ENCODE measurements at regions of chr1 and their contacts with region 1.

Region 1: DNA sequence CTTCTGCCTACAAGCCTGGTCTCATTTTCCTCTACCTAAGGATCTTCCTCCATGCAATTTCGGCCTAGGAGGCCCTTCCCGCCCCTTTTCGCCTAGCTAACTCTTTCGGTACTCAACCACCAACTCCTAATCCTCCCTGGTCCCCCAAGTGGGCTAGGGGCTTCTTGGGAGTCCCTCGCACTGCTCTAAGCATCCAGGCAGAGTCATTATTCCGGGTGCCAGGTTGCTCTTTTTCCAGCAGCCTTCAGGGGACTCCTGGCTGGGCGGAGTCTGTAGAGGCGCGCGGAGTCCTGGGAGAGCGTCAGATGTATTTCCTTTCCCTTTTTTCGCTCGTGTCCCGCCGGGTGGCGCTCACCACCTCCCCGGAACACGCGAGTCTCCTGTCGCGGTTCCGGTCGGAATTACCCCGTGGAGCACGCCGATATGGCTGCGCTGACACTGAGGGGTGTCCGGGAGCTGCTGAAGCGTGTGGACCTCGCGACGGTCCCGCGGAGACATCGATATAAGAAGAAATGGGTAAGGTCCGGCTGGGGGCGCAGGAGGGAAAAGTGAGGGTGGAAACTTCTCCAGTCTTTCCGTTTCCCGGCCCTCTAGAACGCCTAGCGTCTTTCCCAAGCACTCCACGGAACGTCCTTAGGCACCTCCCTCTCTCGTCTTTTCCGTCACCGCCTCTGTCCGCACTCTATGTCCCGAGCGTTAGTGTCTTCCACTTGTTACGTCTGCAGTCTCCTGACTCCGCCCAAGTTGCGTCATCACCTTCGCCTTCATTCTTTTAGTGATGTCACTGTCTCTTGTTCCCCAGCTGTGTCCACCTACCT is at the start of gene NSUN4:
- DNase-seq: peak; percentile 92
- H3K4me3 ChIP-seq: peak within 1 kb of the TSS; percentile 70 to 91 (median 89)
- H3K27ac ChIP-seq: peak within 1 kb of the TSS; percentile 88
- H3K4me1 ChIP-seq: peaks cover 10% of the 10 kb centered on the region
- H3K27me3 ChIP-seq: no peaks in the 10 kb centered on the region
- CTCF ChIP-seq: peak; percentile 69 to 79
- POLR2A ChIP-seq: peak; percentile 84
- total RNA-seq, gene NSUN4: 21.6 and 22.4 TPM in 2 replicates

Region 2: GRCh38 chr1:46303038-46303871 is 37.4 kb before region 1 on chr1 and contains the starts of genes LRRC41 and UQCRH:
- CTCF ChIA-PET with region 1: interaction called, 17 read pairs
- POLR2A ChIA-PET with region 1: interaction called, 5 read pairs
- dilution Hi-C with region 1: no loop called
- intact Hi-C with region 1: loop called (anchors 1 kb)
- DNase-seq: peak; percentile 96
- H3K4me3 ChIP-seq: peak within 1 kb of the TSS; percentile 81 to 94 (median 84)
- H3K27ac ChIP-seq: peak within 1 kb of the TSS; percentile 81
- H3K4me1 ChIP-seq: peaks cover 20% of the 10 kb centered on the region
- H3K27me3 ChIP-seq: no peaks in the 10 kb centered on the region
- CTCF ChIP-seq: peak; percentile 4 to 11
- POLR2A ChIP-seq: peak; percentile 75
- total RNA-seq, gene LRRC41: 69.2 and 71.5 TPM in 2 replicates
- total RNA-seq, gene UQCRH: 253 and 266 TPM in 2 replicates